ENCODE measurements at regions of chr13 and their contacts with region 1.

Region 1: DNA sequence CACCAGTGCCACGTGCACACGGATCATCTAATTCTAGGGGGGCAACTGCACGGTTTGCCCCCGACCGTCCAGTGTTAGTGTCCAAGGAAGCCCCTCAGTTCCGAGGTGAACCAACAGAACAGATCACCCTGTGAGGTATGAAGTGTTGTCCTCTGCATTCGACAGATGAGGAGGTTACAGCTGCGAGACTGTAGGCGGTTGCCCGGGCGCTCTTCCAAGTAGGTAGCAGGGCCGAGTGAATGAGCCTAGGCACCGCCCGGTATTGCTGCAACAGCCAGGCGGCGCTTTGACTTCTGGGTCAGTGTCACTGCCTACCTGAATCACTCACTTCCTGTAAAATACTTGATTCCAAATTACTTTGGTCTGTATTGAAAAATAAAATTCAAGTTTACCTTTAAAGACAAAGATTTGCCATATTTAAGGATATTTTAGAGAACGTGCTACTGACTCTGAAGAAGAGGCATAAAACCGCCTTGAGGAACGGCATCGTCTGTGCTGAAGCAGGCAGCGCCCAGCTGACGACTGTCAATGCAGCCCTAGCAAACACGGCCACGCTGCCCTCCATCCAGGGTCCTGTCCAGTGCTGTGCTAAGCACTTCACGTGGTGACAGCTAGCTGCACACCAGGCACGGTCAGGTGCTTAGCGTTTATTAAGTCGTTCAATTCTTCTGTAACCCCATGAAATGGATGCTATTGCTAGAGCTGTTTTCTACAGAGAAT is 19.3 kb upstream of the RASA3 start:
- DNase-seq: peak; percentile 55 to 79 (median 59)
- H3K4me3 ChIP-seq: peak overlapping the region in 1 of 2 donors; percentile 15
- H3K4me3 Mint-ChIP-seq: peak overlapping the region; percentile 62 to 93 (median 72)
- H3K27ac ChIP-seq: peak overlapping the region; percentile 81
- H3K27ac Mint-ChIP-seq: peak overlapping the region; percentile 95 to 100 (median 100)
- H3K4me1 ChIP-seq: peaks cover 79% of the 10 kb centered on the region
- H3K4me1 Mint-ChIP-seq: peaks cover 60 to 81% (median 72%) of the 10 kb centered on the region in 4 donors
- H3K27me3 ChIP-seq: no peaks in the 10 kb centered on the region
- H3K27me3 Mint-ChIP-seq: no peaks in the 10 kb centered on the region

Region 2: DNA sequence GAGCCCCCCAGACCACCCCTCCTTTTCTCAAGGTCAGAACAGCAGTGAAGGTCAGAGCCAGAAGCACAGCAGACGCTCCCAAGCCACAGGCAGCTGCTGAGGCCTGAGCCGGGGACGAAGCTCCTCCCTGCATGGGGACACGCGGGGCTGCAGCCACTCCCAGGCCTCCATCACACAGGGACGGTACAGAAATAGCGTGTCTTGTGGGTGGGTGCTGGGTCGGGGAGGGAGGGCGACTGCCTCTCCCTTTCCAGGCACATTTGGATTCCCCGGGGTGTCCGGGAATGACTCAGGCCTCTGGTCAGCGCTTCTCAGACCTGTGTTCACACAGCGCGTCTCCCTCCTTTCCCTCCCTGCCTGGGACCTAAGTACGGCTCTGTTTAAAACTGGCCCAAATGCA is 52.5 kb before region 1 on chr13:
- CTCF ChIA-PET with region 1: no interaction called
- POLR2A ChIA-PET with region 1: no interaction called
- intact Hi-C with region 1: no loop called
- DNase-seq: peak in 1 of 5 donors; percentile 49
- H3K4me3 ChIP-seq: no peak overlapping the region
- H3K4me3 Mint-ChIP-seq: no peak overlapping the region
- H3K27ac ChIP-seq: no peak overlapping the region
- H3K27ac Mint-ChIP-seq: peak overlapping the region in 1 of 7 donors; percentile 89
- H3K4me1 ChIP-seq: peaks cover 78% of the 10 kb centered on the region
- H3K4me1 Mint-ChIP-seq: peaks cover 39 to 78% (median 61%) of the 10 kb centered on the region in 4 donors
- H3K27me3 ChIP-seq: no peaks in the 10 kb centered on the region
- H3K27me3 Mint-ChIP-seq: no peaks in the 10 kb centered on the region

Region 3: DNA sequence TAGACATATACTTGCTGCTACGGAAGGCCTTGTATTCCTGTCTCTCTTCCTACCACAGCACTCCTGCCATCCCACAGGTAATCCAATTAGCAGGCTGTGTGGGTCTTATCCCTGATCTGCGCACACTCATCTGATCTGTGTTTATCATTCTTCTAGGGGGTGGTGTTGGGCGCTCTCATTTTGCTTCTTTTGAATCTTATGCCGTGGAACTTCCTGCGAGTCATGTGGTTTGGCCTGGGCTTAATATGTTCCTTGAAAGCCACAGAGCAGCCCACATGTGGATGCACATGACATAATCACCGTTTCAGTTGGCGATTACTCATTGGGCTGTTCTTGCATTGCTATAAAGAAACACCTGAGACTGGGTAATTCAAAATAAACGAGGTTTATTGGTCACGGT is 26.8 kb before region 1 on chr13:
- CTCF ChIA-PET with region 1: interaction called, 11 read pairs
- POLR2A ChIA-PET with region 1: interaction called, 170 read pairs
- intact Hi-C with region 1: loop called (anchors 1 kb)
- DNase-seq: peak; percentile 72 to 87 (median 78)
- H3K4me3 ChIP-seq: peak overlapping the region in 1 of 2 donors; percentile 15
- H3K4me3 Mint-ChIP-seq: peak overlapping the region; percentile 58 to 88 (median 74)
- H3K27ac ChIP-seq: peak overlapping the region; percentile 22
- H3K27ac Mint-ChIP-seq: peak overlapping the region; percentile 85 to 98 (median 93)
- H3K4me1 ChIP-seq: peaks cover 95% of the 10 kb centered on the region
- H3K4me1 Mint-ChIP-seq: peaks cover 52 to 95% (median 77%) of the 10 kb centered on the region in 4 donors
- H3K27me3 ChIP-seq: no peaks in the 10 kb centered on the region
- H3K27me3 Mint-ChIP-seq: no peaks in the 10 kb centered on the region

Region 4: DNA sequence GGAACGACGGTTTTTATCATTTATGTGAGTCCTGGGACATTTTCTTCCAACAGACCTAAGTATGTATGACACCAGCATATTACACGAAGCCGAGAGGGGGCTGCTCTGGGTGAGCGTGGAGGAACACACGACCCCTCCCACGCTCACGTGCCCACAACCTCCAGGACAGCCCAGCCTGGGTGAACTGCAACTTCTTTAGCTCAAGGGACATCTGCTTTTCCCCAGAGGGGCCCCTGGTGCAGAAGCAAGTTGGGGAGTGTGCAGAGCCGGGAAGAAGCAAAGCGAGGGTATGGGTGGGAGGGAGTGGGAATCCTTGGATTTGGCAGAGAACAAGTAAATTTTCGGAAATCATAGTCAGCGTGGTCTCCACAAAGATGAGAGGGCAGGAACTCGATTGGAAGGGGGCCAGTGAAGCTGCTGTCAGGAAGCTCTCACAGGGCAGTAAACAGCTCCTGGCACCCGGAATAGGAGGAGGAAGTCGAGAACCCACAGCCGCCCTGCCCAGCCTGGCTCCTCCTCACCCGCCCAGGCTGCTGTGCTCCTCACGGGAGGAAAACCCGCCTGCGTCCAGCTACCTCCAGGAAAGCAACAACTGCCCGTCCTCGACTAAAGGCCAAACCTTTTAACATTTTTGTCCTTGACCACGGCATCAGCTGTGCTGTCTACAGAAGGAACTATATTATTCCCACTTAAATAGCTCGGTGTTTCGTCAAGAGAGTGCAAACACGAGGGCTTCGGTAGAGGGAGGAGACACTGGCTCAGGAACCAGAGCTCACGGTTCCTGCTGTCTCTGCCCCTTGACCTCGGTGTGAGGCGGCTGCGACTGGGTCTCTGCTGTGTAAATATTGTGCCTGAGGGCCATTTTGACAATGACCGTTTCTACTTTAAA is 10.2 kb after region 1 on chr13:
- CTCF ChIA-PET with region 1: interaction called, 13 read pairs
- POLR2A ChIA-PET with region 1: interaction called, 54 read pairs
- intact Hi-C with region 1: loop called (anchors 1 kb)
- DNase-seq: peak in 3 of 5 donors; percentile 32 to 51 (median 39)
- H3K4me3 ChIP-seq: peak overlapping the region in 1 of 2 donors; percentile 13
- H3K4me3 Mint-ChIP-seq: peak overlapping the region; percentile 50 to 92 (median 86)
- H3K27ac ChIP-seq: peak overlapping the region; percentile 23
- H3K27ac Mint-ChIP-seq: peak overlapping the region; percentile 81 to 97 (median 93)
- H3K4me1 ChIP-seq: peaks cover 81% of the 10 kb centered on the region
- H3K4me1 Mint-ChIP-seq: peaks cover 52 to 95% (median 72%) of the 10 kb centered on the region in 4 donors
- H3K27me3 ChIP-seq: no peaks in the 10 kb centered on the region
- H3K27me3 Mint-ChIP-seq: no peaks in the 10 kb centered on the region

Measured in CD4-positive, alpha-beta memory T cell (primary cell).